ENCODE measurements at regions of chr4 and their contacts with region 1.

Region 1: GRCh38 chr4:158172261-158173258 is at the start of gene GASK1B:
- DNase-seq: peak; percentile 68
- H3K4me3 Mint-ChIP-seq: peak within 1 kb of the TSS; percentile 71
- H3K27ac Mint-ChIP-seq: peak within 1 kb of the TSS; percentile 62
- H3K4me1 Mint-ChIP-seq: peaks cover 42% of the 10 kb centered on the region
- H3K27me3 Mint-ChIP-seq: no peaks in the 10 kb centered on the region
- CTCF ChIP-seq: peak; percentile 72
- total RNA-seq, gene GASK1B: 7.2 and 9.7 TPM in 2 replicates

Region 2: DNA sequence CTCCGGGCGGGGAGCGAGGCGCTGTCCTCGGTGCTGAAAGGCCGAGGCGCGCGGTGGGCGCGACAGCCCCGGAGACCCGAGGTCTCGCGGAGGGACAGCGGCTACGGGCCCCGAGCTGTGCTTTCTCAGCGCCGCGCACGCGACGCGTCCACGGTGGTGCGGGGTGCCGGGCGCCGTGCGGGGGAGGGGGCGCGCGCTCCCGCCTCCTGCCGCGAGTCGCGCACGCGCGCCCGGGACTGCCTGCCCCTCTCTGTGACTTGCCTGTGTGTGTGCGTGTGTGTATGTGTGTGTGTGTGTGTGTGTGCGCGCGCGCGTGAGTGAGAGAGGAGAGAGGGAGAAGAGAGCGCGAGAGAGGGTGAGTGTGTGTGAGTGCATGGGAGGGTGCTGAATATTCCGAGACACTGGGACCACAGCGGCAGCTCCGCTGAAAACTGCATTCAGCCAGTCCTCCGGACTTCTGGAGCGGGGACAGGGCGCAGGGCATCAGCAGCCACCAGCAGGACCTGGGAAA is 952.1 kb before region 1 on chr4 and contains the start of gene GRIA2:
- CTCF ChIA-PET with region 1: no interaction called
- POLR2A ChIA-PET with region 1: no interaction called
- intact Hi-C with region 1: loop called (anchors 5 kb)
- DNase-seq: no peak
- H3K4me3 Mint-ChIP-seq: peak within 1 kb of the TSS; percentile 61
- H3K27ac Mint-ChIP-seq: no peak within 1 kb of the TSS
- H3K4me1 Mint-ChIP-seq: peaks cover 5% of the 10 kb centered on the region
- H3K27me3 Mint-ChIP-seq: peaks cover 32% of the 10 kb centered on the region
- CTCF ChIP-seq: no peak
- total RNA-seq, gene GRIA2: not detected in 2 replicates

Region 3: GRCh38 chr4:158003212-158003611 is 169.3 kb before region 1 on chr4:
- CTCF ChIA-PET with region 1: interaction called, 29 read pairs
- POLR2A ChIA-PET with region 1: interaction called, 6 read pairs
- intact Hi-C with region 1: no loop called
- DNase-seq: no peak
- H3K4me3 Mint-ChIP-seq: no peak overlapping the region
- H3K27ac Mint-ChIP-seq: no peak overlapping the region
- H3K4me1 Mint-ChIP-seq: no peaks in the 10 kb centered on the region
- H3K27me3 Mint-ChIP-seq: no peaks in the 10 kb centered on the region
- CTCF ChIP-seq: no peak

Region 4: GRCh38 chr4:158020176-158020575 is 152.4 kb before region 1 on chr4:
- CTCF ChIA-PET with region 1: interaction called, 12 read pairs
- POLR2A ChIA-PET with region 1: interaction called, 7 read pairs
- intact Hi-C with region 1: no loop called
- DNase-seq: peak; percentile 75
- H3K4me3 Mint-ChIP-seq: peak overlapping the region; percentile 30
- H3K27ac Mint-ChIP-seq: peak overlapping the region; percentile 96
- H3K4me1 Mint-ChIP-seq: peaks cover 31% of the 10 kb centered on the region
- H3K27me3 Mint-ChIP-seq: no peaks in the 10 kb centered on the region
- CTCF ChIP-seq: no peak

Region 5: GRCh38 chr4:158161551-158162354 is 10.8 kb before region 1 on chr4:
- CTCF ChIA-PET with region 1: interaction called, 18 read pairs
- POLR2A ChIA-PET with region 1: interaction called, 10 read pairs
- intact Hi-C with region 1: no loop called
- DNase-seq: peak; percentile 52
- H3K4me3 Mint-ChIP-seq: no peak overlapping the region
- H3K27ac Mint-ChIP-seq: peak overlapping the region; percentile 3
- H3K4me1 Mint-ChIP-seq: peaks cover 44% of the 10 kb centered on the region
- H3K27me3 Mint-ChIP-seq: no peaks in the 10 kb centered on the region
- CTCF ChIP-seq: no peak

Measured in MCF 10A (cell line).